Right ventricle myocardium inferior (tissue), 1 donor: ENCODE measurements at regions of chr19 and their contacts with region 1.

Region 1: DNA sequence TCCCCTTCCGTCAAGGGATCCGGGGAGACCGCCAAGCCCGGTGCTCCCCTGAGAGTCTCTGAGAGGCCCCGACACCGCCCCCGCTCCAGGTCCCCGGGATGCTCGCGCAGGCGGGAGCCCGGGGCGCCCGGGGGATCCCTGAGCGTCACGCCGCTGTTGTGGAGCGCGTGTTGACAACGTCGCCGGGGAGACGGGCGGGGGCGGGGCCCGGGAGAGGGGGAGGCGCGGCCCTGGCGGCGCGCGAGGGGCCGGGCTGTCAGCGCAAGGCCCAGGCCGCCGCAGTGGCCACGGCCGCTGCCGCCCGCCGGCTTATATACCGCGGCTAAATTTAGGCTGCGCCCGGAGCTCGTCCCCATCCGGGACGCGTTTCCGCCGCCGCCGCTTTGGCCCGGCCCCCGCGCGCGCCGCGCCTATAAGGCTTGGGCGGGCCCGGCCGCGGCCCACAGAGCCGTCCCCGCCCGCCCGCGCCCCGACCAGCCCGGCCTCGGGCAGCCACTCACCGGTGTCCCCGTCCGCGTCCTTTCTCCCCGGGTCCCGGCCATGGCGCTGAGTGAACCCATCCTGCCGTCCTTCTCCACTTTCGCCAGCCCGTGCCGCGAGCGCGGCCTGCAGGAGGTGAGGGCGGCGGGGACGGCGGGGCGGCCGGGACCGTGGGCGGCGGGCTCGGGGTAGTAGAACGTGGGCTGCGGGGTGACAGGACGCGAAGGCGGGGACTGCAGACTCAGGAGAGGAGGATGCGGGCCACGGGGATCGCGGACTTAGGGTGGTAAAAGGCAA is at the start of gene KLF2:
- DNase-seq: peak; percentile 98
- ATAC-seq: peak; percentile 91
- total RNA-seq, gene KLF2: 73.1 TPM

Region 2: GRCh38 chr19:16247353-16248182 is 77.0 kb before region 1 on chr19:
- intact Hi-C with region 1: loop called (anchors 2 kb)
- DNase-seq: peak; percentile 94
- ATAC-seq: peak; percentile 97

Region 3: DNA sequence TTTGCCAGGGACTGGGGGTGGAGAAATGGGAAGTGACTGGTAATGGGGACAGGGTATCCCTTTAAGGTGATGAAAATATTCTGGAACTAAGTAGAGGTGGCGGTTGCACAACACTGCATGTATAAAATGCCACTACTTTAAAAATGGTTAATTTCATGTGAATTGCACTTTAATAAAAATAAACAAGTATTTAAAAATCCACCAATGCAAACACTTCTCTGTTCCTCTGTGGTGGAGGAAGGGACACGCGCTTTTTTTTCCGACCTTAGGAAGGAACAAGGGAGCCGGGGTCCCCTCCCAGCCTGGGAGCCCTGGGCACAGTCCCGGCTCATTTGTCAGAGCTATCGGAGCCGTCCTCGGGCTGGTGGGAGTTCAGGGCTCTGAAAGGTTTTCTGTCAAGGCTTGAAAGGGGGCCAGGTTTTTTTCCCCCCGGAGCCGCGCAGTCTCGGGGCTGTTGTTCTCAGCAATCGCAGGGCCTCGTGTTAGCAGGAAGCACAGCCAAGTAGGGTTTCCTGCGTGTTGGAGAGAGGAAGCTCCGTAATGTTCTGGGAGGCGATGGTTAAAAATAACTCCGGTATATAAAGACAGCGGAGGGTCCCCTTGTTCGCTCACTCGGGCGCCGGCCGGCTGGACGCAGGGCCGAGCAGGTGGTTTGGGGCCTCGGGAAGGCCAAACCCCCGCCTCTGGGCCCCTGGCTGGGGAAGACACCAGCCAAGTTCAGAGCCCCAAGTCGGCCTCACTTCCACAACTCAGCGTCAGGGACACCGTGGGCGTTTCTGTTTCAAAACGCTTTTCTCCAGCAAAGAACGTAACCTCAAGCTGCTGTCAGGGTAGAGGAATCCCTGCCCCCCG is 41.1 kb before region 1 on chr19:
- intact Hi-C with region 1: loop called (anchors 2 kb)
- DNase-seq: peak; percentile 89
- ATAC-seq: peak; percentile 88

Region 4: DNA sequence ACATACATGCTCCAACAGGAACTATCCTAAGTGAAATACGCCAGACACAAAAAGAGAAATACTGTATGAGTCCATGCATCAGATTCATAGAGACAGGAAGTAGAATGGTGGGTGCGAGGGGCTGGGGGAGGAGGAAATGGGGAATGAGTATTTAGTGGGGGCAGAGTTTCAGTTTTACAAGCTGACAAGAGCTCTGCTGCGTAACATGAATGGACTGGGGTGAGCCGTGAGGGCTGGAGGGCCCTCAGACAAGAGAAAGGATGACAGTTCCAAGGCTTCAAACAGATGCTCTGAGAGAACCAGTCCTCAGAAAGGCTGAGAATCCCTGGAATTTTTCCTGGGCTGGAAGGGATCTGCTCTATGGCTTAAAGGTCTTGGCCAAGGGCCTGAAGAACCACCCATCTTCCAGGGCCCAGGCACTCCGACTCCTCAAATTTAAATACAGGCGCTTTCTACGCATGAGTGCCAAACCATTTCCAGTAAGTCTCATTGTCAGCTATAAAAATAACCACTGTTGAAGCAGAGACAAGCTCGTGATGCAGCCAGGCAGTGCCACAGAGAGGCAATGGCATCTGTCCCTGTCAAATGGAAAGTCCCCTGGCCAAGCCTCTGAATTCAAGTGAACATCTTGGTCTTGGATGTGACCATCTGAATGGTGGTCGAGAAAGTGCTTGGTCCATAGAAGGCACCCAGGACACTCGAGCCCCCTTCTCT is 17.6 kb after region 1 on chr19:
- intact Hi-C with region 1: loop called (anchors 2 kb)
- DNase-seq: no peak
- ATAC-seq: peak; percentile 75